ENCODE measurements at regions of chr1 and their contacts with region 1.

Region 1: DNA sequence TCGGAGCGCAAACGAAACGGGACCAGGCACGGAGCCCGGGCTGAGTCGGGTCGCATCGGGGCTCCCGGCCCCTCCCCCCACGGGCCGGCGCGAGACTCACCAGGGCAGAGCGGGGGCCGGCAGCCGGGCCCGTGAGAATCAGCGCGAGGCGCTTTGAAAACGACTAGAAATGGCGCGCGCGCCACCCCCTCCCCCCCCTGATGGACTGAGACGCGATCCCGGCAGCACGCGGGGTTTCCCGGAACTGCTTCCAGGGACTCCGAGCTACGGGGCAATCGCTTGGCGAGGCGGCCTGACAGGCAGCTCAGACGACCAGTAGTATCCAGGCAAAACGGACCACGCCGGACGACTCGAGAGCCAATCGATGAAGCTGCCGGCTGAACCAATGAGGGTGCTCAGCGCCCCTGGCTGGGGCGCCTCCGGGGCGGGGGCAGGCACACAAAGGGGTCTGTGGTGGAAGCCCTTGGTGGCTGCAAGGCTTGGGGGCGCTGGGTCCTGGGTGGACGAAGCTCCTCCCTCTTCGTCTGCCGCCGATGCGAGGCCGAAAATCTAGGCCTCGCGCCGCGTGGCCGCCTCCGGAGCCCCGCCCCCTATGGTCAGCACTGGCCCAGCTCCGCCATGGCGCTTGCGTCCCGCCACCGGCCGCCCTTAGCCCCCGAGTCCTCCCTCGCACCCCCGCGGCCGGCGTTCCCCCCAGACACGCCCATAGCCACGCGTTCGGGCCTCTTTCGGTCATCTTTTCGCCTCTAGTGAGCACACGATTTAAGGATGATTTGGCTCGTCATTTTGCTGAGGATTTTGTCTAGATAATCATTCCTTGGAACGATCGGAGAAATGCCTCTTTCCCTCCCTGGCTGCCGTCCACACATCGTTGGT is at the start of gene HNRNPR:
- H3K4me3 ChIP-seq: peak within 1 kb of the TSS; percentile 84
- H3K27ac ChIP-seq: peak within 1 kb of the TSS; percentile 96
- H3K4me1 ChIP-seq: peaks cover 9% of the 10 kb centered on the region
- CTCF ChIP-seq: peak; percentile 76

Region 2: DNA sequence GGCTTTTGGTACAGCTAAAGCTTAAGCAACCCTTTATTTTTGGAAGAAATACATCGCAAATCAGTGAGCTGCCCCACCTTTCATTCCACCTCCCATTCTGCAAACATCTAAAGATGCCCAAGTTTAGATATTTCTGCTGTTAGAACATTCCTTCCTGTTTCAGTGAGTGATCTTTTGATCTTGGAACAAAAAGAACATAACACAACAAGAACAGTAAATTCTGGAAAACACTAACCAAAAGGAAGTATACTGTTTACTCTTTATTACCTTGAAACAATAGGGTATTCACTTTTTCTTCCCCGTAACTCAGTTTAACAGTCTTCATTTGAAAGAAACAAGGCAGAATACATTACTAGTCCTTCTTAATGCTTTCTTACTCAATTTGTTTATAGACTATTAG is 40.8 kb before region 1 on chr1:
- CTCF ChIA-PET with region 1: no interaction called
- POLR2A ChIA-PET with region 1: interaction called, 10 read pairs
- H3K4me3 ChIP-seq: no peak overlapping the region
- H3K27ac ChIP-seq: no peak overlapping the region
- H3K4me1 ChIP-seq: no peaks in the 10 kb centered on the region
- CTCF ChIP-seq: no peak

Region 3: DNA sequence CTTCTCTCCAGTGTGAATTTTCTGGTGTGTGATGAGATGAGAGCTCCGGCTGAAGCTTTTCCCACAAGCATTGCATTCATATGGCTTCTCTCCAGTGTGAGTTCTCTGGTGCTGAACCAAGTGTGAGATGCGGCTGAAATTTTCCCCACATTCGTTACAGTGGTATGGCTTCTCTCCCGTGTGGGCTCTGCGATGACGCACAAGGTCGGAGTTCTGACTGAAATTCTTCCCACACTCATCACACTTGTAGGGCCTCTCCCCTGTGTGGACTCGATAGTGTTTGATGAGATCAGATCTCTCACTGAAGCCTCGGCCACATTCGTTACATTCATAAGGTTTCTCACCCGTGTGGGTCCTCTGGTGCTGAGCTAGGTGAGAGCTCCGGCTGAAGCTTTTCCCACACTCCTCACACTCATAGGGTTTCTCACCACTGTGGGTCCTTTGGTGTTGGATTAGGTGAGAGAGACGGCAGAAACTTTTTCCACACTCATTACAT is 17.9 kb after region 1 on chr1:
- CTCF ChIA-PET with region 1: no interaction called
- POLR2A ChIA-PET with region 1: interaction called, 121 read pairs
- H3K4me3 ChIP-seq: no peak overlapping the region
- H3K27ac ChIP-seq: no peak overlapping the region
- H3K4me1 ChIP-seq: no peaks in the 10 kb centered on the region
- CTCF ChIP-seq: no peak

Region 4: GRCh38 chr1:23367791-23368561 is 23.6 kb after region 1 on chr1:
- CTCF ChIA-PET with region 1: interaction called, 3 read pairs
- POLR2A ChIA-PET with region 1: interaction called, 121 read pairs
- H3K4me3 ChIP-seq: peak overlapping the region; percentile 95
- H3K27ac ChIP-seq: peak overlapping the region; percentile 93
- H3K4me1 ChIP-seq: peaks cover 17% of the 10 kb centered on the region
- CTCF ChIP-seq: peak; percentile 38; the same call in 1 of the 2 replicates

Region 5: DNA sequence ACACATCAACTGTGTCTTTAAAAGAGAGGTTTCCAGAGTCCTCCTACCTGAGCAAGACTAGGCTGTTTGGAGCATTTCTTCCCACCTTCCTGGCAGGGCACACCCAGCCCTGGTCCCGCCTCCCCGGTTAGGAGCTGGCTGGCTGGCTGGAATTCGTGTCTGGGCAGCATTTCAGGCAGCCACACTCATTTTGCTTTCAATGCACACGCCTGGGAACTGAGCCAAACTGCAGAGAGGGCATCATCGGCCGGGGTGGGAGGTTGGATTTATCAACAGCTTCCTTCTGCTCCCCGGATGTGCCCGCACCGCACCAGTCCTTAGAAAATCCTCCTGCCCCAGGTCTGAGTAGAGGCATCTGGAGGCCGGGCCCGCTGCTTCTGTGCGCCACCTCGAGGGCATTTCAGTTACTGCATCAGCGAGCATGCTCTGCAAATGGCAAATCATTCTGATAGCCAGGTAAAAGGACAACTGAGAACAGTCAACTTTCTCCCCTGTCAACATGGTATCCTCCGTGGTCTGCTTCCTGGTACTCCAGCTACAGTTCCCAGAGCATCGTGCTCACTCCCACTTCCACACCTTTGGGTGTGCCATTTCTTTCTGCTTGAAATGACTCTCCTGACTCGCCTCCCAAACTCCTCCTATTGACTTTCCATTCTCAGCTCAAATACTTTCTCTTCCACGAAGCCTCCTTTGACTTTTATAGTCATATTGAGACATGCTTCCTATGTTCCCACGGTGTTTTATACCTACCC is 59.6 kb after region 1 on chr1:
- CTCF ChIA-PET with region 1: interaction called, 25 read pairs
- POLR2A ChIA-PET with region 1: interaction called, 50 read pairs
- H3K4me3 ChIP-seq: no peak overlapping the region
- H3K27ac ChIP-seq: peak overlapping the region; percentile 26
- H3K4me1 ChIP-seq: peaks cover 13% of the 10 kb centered on the region
- CTCF ChIP-seq: peak; percentile 96

Region 6: DNA sequence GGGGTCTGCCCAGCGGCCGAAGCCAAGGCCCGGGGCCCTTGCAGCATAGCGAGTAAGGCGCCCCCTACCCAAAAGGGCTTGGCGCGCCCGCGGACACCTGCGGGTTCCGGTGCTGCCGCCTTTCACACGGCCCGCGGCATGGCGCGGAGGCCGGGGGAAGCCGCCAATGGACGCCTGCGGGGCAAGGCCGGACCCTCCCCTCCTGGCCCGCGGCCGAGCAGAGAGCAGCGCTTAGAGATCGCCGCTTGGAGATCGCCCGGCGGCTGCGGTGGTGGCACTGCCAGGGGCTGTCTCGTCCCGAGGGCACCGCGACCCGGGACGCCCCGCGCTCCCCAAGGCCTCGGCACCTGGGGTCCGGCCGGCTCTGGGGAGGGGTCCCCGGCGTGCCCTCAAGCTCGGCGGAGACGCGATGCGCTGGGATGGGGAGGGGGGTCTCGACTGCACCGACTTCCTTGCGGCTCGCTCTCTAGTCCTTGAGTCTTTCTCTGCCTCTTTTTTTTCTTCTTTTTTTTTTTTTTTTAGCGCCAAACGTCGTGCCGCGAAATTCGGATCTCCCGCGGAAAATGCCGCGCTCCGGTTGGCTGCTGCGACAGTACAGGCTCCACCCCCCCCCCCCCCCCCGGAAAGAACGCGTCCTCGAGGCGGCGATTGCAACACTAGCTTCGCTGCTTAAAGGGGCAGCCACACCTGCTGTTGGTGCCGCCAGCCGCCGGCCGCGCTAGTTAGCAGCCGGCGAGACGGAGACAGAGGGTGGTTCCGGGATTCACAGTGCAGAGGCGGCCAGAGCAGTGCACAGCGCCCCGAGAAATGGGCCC is 186.6 kb after region 1 on chr1 and contains the start of gene E2F2:
- CTCF ChIA-PET with region 1: no interaction called
- POLR2A ChIA-PET with region 1: interaction called, 14 read pairs
- H3K4me3 ChIP-seq: peak within 1 kb of the TSS; percentile 69
- H3K27ac ChIP-seq: peak within 1 kb of the TSS; percentile 89
- H3K4me1 ChIP-seq: peaks cover 2% of the 10 kb centered on the region; the same call in 1 of the 2 replicates
- CTCF ChIP-seq: peak; percentile 84

Measured in HEK293 (cell line).